ENCODE measurements at regions of chr4 and their contacts with region 1.

Region 1: GRCh38 chr4:18593445-18594002 is 572.0 kb upstream of the LCORL start:
- DNase-seq: peak; percentile 49 to 60 (median 57)
- H3K4me3 ChIP-seq: no peak overlapping the region
- H3K4me3 Mint-ChIP-seq: no peak overlapping the region
- H3K27ac ChIP-seq: no peak overlapping the region
- H3K27ac Mint-ChIP-seq: no peak overlapping the region
- H3K4me1 ChIP-seq: peaks cover 7% of the 10 kb centered on the region
- H3K4me1 Mint-ChIP-seq: peaks cover 5 to 6% (median 6%) of the 10 kb centered on the region in 4 donors
- H3K27me3 ChIP-seq: no peaks in the 10 kb centered on the region
- H3K27me3 Mint-ChIP-seq: peaks cover 7 to 22% of the 10 kb centered on the region in 2 donors

Region 2: DNA sequence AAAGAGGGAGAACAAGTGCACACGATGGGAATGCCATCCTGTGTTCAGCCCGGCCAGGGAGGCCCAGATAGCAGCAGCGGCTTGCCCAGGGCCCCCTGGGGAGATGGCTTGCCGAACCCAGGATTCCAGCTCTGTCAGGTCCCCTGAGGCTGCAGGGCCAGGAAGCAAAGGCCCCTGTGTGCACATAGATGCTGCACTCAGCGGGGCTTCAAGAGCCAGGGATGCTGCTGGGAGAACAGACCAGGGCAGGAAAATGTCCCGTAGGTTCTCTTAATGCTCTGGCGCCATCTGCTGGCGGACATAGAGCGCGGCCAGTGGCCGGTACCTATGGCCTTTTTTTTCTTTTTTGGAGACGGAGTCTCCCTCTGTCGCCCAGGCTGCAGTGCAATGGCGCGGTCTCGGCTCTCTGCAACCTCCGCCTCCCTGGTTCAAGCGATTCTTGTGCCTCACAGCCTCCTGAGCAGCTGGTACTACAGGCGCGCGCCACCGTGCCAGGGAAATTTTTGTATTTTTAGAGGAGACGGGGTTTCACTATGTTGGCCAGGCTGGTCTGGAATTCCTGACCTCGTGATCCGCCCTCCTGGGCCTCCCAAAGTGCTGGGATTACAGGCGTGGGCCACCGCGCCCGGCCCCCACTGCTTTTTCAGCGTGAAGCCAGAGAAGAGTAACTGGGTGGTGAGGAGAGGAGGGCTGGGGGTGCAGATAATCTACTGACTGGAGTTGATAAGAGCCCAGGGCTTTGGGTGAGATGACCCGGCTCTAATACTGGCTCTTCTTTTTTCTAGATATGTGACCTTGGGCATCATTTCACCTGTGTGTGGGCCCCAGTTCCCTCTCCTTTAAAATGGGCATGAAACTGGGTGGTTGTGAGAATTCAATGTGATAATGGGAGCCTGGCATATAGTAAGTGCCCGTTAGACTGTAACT is 956.6 kb before region 1 on chr4:
- CTCF ChIA-PET with region 1: interaction called, 3 read pairs
- POLR2A ChIA-PET with region 1: no interaction called
- intact Hi-C with region 1: loop called (anchors 2 kb)
- DNase-seq: peak; percentile 49 to 64 (median 59)
- H3K4me3 ChIP-seq: no peak overlapping the region
- H3K4me3 Mint-ChIP-seq: no peak overlapping the region
- H3K27ac ChIP-seq: no peak overlapping the region
- H3K27ac Mint-ChIP-seq: peak overlapping the region in 4 of 7 donors; percentile 7 to 56 (median 34)
- H3K4me1 ChIP-seq: no peaks in the 10 kb centered on the region
- H3K4me1 Mint-ChIP-seq: peaks cover 0 to 5% (median under 1%) of the 10 kb centered on the region in 4 donors
- H3K27me3 ChIP-seq: no peaks in the 10 kb centered on the region
- H3K27me3 Mint-ChIP-seq: no peaks in the 10 kb centered on the region

Region 3: DNA sequence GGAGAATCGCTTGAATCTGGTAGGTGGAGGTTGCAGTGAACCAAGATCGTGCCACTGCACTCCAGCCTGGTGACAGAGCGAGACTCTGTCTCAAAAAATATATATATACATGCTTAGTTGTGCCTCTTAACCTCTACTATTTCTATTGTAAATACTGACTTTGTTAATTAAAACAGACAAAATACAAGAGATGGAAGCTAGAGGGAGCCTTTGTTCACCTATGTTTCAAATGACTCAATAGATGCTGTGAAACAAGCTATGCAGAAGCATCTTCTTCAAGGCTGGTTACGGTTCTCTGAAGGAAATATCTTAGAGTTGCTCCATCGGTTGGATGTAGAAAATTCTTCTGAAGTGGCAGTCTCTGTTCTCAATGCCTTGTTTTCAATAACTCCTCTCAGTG is 776.5 kb before region 1 on chr4:
- CTCF ChIA-PET with region 1: interaction called, 80 read pairs
- POLR2A ChIA-PET with region 1: no interaction called
- intact Hi-C with region 1: loop called (anchors 1 kb)
- DNase-seq: peak in 4 of 5 donors; percentile 45 to 58 (median 50)
- H3K4me3 ChIP-seq: no peak overlapping the region
- H3K4me3 Mint-ChIP-seq: peak overlapping the region in 7 of 8 donors; percentile 8 to 84 (median 58)
- H3K27ac ChIP-seq: no peak overlapping the region
- H3K27ac Mint-ChIP-seq: peak overlapping the region; percentile 31 to 74 (median 57)
- H3K4me1 ChIP-seq: peaks cover 12% of the 10 kb centered on the region
- H3K4me1 Mint-ChIP-seq: peaks cover 13 to 17% (median 15%) of the 10 kb centered on the region in 4 donors
- H3K27me3 ChIP-seq: no peaks in the 10 kb centered on the region
- H3K27me3 Mint-ChIP-seq: no peaks in the 10 kb centered on the region

Region 4: DNA sequence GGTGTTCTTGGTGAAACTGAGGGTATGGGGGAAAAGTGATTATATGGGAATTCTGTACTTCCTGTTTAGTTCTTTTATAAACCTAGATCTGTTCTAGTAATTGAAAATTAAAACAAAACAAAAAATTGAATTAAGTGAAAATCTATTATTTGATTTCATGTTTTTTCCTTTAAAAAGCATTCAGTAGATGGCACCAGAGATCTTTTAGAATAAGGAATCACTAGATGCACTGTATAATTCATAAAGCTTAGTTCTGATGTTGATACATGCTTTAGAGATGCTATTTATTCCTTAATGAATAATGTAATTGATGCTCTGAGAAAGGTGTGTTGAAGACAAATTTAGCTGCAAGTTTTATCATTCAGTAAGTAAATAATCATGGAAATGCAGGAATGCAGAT is 659.2 kb before region 1 on chr4:
- CTCF ChIA-PET with region 1: no interaction called
- POLR2A ChIA-PET with region 1: no interaction called
- intact Hi-C with region 1: loop called (anchors 2 kb)
- DNase-seq: no peak
- H3K4me3 ChIP-seq: no peak overlapping the region
- H3K4me3 Mint-ChIP-seq: no peak overlapping the region
- H3K27ac ChIP-seq: no peak overlapping the region
- H3K27ac Mint-ChIP-seq: no peak overlapping the region
- H3K4me1 ChIP-seq: no peaks in the 10 kb centered on the region
- H3K4me1 Mint-ChIP-seq: peaks cover 0 to 1% (median 0%) of the 10 kb centered on the region in 4 donors
- H3K27me3 ChIP-seq: no peaks in the 10 kb centered on the region
- H3K27me3 Mint-ChIP-seq: no peaks in the 10 kb centered on the region

Measured in CD4-positive, alpha-beta memory T cell (primary cell).